CD4-positive, alpha-beta memory T cell (primary cell): ENCODE measurements at regions of chr7 and their contacts with region 1.

Region 1: GRCh38 chr7:91496251-91496820 is 232.1 kb downstream of the FZD1 start:
- DNase-seq: no peak
- H3K4me3 ChIP-seq: no peak overlapping the region
- H3K4me3 Mint-ChIP-seq: no peak overlapping the region
- H3K27ac ChIP-seq: no peak overlapping the region
- H3K27ac Mint-ChIP-seq: no peak overlapping the region
- H3K4me1 ChIP-seq: no peaks in the 10 kb centered on the region
- H3K4me1 Mint-ChIP-seq: no peaks in the 10 kb centered on the region
- H3K27me3 ChIP-seq: no peaks in the 10 kb centered on the region
- H3K27me3 Mint-ChIP-seq: no peaks in the 10 kb centered on the region

Region 2: GRCh38 chr7:90412458-90413184 is 1083.7 kb before region 1 on chr7:
- CTCF ChIA-PET with region 1: no interaction called
- POLR2A ChIA-PET with region 1: no interaction called
- intact Hi-C with region 1: no loop called
- DNase-seq: no peak
- H3K4me3 ChIP-seq: no peak overlapping the region
- H3K4me3 Mint-ChIP-seq: no peak overlapping the region
- H3K27ac ChIP-seq: no peak overlapping the region
- H3K27ac Mint-ChIP-seq: peak overlapping the region in 1 of 7 donors; percentile 8
- H3K4me1 ChIP-seq: no peaks in the 10 kb centered on the region
- H3K4me1 Mint-ChIP-seq: no peaks in the 10 kb centered on the region
- H3K27me3 ChIP-seq: no peaks in the 10 kb centered on the region
- H3K27me3 Mint-ChIP-seq: no peaks in the 10 kb centered on the region

Region 3: GRCh38 chr7:91541641-91542040 is 45.3 kb after region 1 on chr7:
- CTCF ChIA-PET with region 1: no interaction called
- POLR2A ChIA-PET with region 1: no interaction called
- intact Hi-C with region 1: loop called (anchors 10 kb)
- DNase-seq: no peak
- H3K4me3 ChIP-seq: no peak overlapping the region
- H3K4me3 Mint-ChIP-seq: no peak overlapping the region
- H3K27ac ChIP-seq: no peak overlapping the region
- H3K27ac Mint-ChIP-seq: no peak overlapping the region
- H3K4me1 ChIP-seq: no peaks in the 10 kb centered on the region
- H3K4me1 Mint-ChIP-seq: no peaks in the 10 kb centered on the region
- H3K27me3 ChIP-seq: no peaks in the 10 kb centered on the region
- H3K27me3 Mint-ChIP-seq: no peaks in the 10 kb centered on the region